ENCODE measurements at regions of chr7 and their contacts with region 1.

Region 1: DNA sequence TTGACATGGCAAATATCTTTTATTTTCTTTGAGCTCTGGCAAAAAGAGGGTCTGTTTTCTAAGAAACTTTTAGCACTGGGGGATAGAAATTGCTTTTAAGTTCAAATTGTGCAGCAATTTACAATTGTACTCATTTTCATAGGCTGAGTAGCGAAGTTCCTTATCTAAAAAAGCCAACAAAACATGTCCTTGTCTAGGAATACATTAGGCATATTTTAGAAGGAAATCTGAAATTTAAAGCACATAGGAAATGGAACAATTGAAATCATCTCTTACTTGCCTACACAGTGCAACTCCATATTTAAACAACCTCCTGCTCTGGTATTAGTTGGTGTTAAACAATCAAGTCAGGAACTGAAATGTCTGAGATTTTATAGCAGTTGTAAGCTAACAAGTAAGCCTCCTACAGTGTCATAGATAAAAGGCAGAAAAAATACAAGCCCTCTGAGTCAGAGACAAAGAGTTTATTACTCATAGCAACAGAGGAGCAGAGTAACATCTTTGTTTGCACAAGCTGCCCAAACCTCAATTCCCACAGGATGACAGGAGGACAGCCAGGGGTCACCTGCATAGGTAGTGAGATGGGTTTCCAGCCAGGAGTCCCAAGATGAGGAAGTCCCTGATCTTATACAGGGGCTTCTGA is 280.2 kb upstream of the HGF start:
- DNase-seq: peak; percentile 94
- ATAC-seq: peak; percentile 94
- H3K4me3 ChIP-seq: peak overlapping the region; percentile 39; the same call in 1 of the 2 replicates
- H3K27ac ChIP-seq: peak overlapping the region; percentile 93
- H3K4me1 ChIP-seq: peaks cover 28% of the 10 kb centered on the region
- H3K27me3 ChIP-seq: no peaks in the 10 kb centered on the region
- CTCF ChIP-seq: no peak

Region 2: DNA sequence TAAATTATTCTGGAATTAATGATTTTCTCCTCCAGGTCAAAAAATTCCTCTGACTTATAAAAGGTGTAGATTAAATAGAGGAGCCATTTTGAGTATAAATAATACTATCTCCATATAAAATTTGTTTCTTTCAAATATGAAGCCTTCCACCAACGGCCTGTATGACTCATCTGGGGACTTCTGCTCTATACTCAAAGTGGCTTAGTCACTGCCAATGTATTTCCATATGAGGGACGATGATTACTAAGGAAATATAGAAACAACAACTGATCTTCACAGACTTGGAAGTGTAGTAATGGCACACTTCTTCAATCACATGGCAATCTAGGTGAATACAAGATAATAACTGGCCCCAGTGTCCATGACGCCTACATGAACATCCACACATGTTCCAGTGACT is 55.5 kb after region 1 on chr7:
- CTCF ChIA-PET with region 1: no interaction called
- POLR2A ChIA-PET with region 1: no interaction called
- intact Hi-C with region 1: loop called (anchors 1 kb)
- DNase-seq: peak; percentile 80
- ATAC-seq: peak; percentile 82
- H3K4me3 ChIP-seq: no peak overlapping the region
- H3K27ac ChIP-seq: peak overlapping the region; percentile 75
- H3K4me1 ChIP-seq: peaks cover 21% of the 10 kb centered on the region
- H3K27me3 ChIP-seq: no peaks in the 10 kb centered on the region
- CTCF ChIP-seq: no peak

Region 3: DNA sequence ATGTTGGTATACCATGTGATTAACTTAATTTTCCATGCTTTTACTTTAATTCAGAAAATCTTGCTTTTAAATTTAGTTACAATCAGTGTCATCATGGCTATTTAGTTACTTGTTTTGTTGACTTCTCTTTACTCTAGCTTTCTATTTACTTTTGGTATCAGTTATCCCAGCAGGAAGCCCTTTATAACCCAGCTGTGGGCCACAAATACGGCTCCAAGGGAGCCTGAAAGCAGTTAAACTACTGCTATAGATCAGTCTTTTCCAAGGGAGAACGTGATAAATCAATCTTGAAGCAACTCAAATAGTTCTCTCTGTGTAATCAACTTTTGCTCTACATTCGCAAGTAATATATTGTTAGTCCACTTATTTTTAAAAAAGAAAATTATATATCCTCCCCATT is 106.2 kb after region 1 on chr7:
- CTCF ChIA-PET with region 1: no interaction called
- POLR2A ChIA-PET with region 1: no interaction called
- intact Hi-C with region 1: loop called (anchors 1 kb)
- DNase-seq: no peak
- ATAC-seq: no peak
- H3K4me3 ChIP-seq: no peak overlapping the region
- H3K27ac ChIP-seq: no peak overlapping the region
- H3K4me1 ChIP-seq: no peaks in the 10 kb centered on the region; the same call in 1 of the 2 replicates
- H3K27me3 ChIP-seq: peaks cover 18% of the 10 kb centered on the region; the same call in 1 of the 2 replicates
- CTCF ChIP-seq: no peak

Measured in PC-3 (cell line).